GM10248 (cell line): ENCODE measurements at regions of chr11 and their contacts with region 1.

Region 1: DNA sequence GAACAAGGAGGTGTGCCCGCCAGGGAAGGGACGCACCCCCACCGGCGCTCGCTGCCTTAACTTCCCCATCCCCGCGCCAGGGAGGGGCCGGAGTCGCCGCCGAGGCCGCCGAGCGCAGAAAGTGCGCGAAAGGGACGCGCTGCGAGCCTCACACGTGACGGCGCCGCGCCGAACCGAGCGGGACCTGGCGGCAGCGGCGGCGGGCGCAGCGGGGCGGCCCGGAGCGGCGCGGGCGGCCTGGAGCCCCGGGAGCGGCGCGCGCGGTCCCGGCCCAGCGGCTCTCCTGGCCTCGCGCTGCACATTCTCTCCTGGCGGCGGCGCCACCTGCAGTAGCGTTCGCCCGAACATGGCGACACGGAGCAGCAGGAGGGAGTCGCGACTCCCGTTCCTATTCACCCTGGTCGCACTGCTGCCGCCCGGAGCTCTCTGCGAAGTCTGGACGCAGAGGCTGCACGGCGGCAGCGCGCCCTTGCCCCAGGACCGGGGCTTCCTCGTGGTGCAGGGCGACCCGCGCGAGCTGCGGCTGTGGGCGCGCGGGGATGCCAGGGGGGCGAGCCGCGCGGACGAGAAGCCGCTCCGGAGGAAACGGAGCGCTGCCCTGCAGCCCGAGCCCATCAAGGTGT is at the start of gene SORL1:
- DNase-seq: peak; percentile 80
- CTCF ChIP-seq: peak; percentile 93

Region 2: DNA sequence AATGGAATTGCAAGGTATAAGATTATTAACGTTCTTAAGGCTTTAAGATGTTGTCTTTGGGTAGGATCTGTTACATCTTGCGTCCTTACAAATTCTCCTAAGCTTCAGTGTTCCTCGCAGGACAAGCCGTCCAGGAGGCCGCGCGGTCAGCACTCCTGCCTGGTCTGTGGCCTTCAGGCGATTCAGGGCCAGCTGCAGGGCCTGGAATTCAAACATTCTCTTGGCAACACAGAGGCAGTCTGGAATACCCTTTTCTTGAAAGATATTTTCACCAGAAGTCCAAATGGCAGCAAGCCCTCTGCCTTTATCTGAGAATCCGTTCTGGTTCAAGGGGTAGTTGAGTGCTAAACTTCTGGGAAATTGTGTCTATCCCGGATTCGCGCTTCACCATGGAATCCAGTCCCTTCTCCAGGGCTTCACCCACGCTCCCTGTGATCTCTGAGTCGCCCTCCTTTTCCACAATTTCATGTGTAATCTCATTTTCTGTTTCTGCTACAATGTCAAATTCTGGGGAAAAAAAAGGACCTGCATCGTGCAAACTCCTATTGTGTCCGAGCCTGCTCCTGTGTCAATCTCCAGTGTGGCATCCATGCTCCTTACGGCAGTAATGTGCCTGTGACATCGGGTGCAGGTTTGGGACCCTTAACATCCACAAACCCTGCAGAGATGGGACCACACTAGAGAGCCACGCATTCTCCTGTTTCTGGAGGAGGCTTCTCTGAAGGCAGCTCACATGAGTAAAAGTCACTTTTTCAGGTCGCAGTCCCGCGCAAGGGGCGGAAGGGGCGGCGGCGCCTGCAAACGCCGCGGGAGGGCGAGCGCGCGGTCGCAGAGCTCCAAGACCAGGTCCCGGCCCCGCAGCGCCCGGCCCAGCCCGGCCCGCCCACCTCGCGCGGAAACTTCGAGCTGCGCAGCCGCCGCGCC is 25.4 kb before region 1 on chr11:
- CTCF ChIA-PET with region 1: interaction called, 13 read pairs
- POLR2A ChIA-PET with region 1: no interaction called
- DNase-seq: peak; percentile 68
- CTCF ChIP-seq: peak; percentile 37

Region 3: GRCh38 chr11:121437018-121437685 is 14.9 kb before region 1 on chr11:
- CTCF ChIA-PET with region 1: interaction called, 29 read pairs
- POLR2A ChIA-PET with region 1: no interaction called
- DNase-seq: no peak
- CTCF ChIP-seq: no peak

Region 4: DNA sequence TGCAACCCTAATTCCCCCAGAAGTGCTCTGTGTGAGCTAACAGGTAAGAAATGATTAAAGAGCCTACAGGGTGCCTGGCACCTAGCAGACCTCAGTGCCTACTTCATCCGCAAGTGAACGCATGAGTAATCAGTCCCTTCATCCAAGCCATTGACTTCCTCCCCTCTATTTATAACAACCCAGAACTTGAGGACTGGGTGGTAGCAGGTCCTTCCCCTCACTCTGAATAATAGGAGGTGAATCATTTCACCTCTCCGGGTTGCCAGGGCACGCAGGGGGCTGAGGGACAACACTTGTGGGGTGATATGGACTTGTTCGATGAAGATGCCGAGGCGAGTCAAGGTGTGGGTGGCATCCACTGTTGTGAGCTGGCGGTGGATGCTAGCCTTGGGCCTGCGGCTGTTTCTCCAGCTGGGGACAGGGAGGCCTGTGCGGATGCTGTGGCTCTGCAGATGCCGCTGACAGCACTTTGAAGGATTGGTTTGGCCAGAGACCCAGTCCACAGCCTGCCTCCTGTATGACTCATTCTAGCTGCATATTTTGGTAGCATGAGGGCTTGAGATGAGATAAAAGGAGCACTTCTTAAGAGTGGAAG is 12.4 kb after region 1 on chr11:
- CTCF ChIA-PET with region 1: interaction called, 122 read pairs
- POLR2A ChIA-PET with region 1: interaction called, 3 read pairs
- DNase-seq: no peak
- CTCF ChIP-seq: no peak

Region 5: GRCh38 chr11:121503051-121503450 is 51.0 kb after region 1 on chr11:
- CTCF ChIA-PET with region 1: no interaction called
- POLR2A ChIA-PET with region 1: no interaction called
- DNase-seq: no peak
- CTCF ChIP-seq: no peak